ENCODE measurements at regions of chr9 and their contacts with region 1.

Region 1: DNA sequence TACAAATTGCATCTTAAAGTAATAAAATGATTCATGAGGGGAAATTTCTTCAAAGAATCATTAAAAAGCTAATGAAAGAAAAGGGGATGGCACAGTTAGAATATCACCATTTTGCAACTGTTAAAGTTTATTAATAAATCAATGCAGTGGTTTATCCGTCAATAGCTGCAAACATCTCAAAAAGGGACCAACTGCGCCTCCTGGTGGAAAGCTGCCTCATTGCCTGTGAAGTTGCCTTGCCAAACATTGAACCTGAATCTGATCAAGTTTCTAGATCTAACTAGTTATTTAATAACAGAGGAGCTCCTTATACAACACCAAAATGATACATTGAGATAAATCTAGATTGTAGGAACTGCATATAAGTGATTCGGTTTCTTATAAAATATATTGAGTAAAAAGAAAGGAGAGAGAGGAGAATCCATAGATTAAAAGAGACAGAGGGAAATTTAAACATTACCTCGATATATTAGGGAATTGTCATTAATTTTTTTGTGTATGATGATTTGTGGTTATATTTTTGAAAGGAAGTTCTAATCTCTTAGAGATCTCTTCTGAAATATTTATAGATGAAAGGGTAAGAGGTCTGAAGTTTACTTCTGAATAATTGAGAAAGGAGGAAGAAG is 6.9 kb upstream of the NDUFB6 start:
- DNase-seq: peak; percentile 59 to 76
- ATAC-seq: peak in 2 of 4 donors; percentile 53 to 75
- H3K4me3 ChIP-seq: no peak overlapping the region
- H3K27ac ChIP-seq: no peak overlapping the region
- H3K4me1 ChIP-seq: no peaks in the 10 kb centered on the region
- H3K27me3 ChIP-seq: no peaks in the 10 kb centered on the region
- CTCF ChIP-seq: peak; percentile 91

Region 2: DNA sequence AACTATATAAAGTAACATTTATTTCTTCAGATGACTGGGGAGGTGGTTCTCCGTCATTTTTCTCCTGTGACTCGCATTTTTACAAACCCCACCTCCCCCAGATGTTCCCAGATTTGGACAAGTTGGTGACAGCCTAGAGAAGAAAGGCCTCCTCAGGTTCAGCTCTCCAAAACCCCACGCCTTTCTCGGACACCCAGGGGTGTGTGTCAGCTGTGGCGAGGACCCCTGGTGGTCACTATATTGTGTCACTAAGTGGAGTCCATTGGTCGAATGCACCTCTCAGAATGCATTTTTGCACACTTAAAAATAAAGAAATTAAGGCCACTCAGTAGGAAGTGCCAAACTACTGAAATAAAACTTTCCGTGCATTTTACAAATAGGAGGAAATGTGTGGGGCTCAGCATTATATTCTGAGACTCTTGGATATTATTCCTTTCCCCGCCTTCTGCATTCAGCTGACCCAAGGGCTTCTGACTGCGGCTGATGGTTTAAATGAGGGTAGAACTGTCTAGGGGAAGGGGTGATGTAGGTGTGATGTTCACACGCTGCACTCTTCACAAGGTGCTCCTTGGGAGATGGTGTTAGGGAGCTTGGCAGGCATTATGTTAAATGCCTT is 147.8 kb before region 1 on chr9:
- intact Hi-C with region 1: loop called in 1 of 2 experiments (anchors 5 kb)
- DNase-seq: peak; percentile 23 to 61
- ATAC-seq: peak; percentile 58 to 84 (median 66)
- H3K4me3 ChIP-seq: no peak overlapping the region
- H3K27ac ChIP-seq: no peak overlapping the region
- H3K4me1 ChIP-seq: no peaks in the 10 kb centered on the region
- H3K27me3 ChIP-seq: no peaks in the 10 kb centered on the region
- CTCF ChIP-seq: peak; percentile 52

Measured in psoas muscle (tissue), 8 donors.